ENCODE measurements at regions of chr19 and their contacts with region 1.

Region 1: GRCh38 chr19:18450931-18451845 is 13.3 kb upstream of the ISYNA1 start:
- DNase-seq: peak; percentile 74
- H3K27ac ChIP-seq: peak overlapping the region; percentile 72
- CTCF ChIP-seq: peak; percentile 99

Region 2: DNA sequence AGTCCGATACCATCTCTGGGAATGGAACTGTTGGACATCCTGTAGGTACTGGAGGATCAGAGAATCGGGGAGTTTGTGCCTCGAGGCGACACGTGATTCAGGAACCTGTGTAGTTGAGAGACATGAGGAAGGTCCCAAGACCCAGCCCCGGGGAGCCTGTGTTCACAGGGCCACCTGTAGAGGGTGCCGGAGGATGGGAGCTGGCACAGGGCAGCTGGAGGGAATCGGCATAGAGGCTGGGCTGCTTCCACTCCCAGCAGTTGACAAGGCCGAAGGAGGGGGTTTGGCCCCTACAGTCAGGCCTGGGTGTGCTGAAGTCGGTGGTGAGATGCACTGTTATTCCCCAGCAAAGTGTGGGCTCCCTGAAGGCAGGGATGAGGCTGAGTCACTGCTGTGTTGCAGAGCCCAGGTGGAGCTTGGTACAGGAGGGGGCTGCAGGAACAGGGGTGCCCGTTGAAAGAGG is 10.7 kb before region 1 on chr19:
- CTCF ChIA-PET with region 1: interaction called, 16 read pairs
- POLR2A ChIA-PET with region 1: interaction called, 3 read pairs
- DNase-seq: no peak
- H3K27ac ChIP-seq: peak overlapping the region; percentile 94
- CTCF ChIP-seq: no peak; the same call in 1 of the 2 replicates

Region 3: DNA sequence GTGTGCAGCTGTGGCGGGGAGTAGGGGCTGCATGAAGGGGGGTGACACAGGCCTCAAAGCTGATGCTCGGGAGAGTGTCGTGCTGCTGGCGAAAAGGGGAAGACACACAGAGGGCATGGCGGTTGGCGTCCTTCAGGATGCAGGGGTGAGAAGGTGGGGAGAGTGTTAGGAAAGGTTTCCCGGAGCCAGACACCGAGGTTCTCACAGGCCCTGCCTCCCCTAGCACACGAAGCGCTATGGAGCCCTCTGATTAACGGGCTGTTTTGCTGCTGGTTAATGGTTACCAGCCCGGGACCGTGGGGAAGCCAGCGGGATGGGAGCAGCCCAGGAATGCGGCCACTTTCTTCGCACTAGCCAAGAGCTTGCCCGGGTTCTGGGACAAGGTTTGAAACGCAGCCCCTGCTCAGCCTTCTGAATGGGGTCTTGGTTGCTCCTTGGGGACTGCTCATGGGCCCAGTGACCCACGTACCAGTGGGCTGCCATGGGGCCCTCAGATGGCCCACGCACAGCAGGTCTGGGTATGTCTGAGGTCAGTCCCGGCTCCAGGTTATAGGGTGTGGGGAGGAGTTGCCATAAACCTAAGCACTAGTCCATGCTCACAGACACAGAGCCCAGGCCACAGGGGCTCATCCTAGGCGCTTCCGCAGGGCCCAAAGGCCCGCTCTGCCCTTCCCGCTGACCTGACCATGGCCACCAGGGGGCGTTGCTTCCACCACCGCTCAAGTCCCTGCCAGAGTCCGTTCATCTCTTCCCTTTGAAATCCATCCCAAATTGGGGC is 18.1 kb after region 1 on chr19:
- CTCF ChIA-PET with region 1: interaction called, 21 read pairs
- POLR2A ChIA-PET with region 1: no interaction called
- DNase-seq: no peak
- H3K27ac ChIP-seq: peak overlapping the region; percentile 72
- CTCF ChIP-seq: peak; percentile 64

Region 4: GRCh38 chr19:18521885-18522624 is 70.9 kb after region 1 on chr19 and contains the start of gene ELL:
- CTCF ChIA-PET with region 1: interaction called, 10 read pairs
- POLR2A ChIA-PET with region 1: no interaction called
- DNase-seq: peak; percentile 99
- H3K27ac ChIP-seq: peak within 1 kb of the TSS; percentile 97
- CTCF ChIP-seq: no peak

Measured in RWPE1 (cell line).